BJ (cell line): ENCODE measurements at regions of chr2 and their contacts with region 1.

Region 1: GRCh38 chr2:188976545-188977268 is 2.5 kb downstream of the COL3A1 start:
- DNase-seq: no peak
- H3K4me3 ChIP-seq: peak overlapping the region; percentile 67
- H3K27me3 ChIP-seq: no peaks in the 10 kb centered on the region
- CTCF ChIP-seq: peak; percentile 55

Region 2: GRCh38 chr2:189179570-189179950 is 202.9 kb after region 1 on chr2 and contains the start of gene COL5A2:
- CTCF ChIA-PET with region 1: no interaction called
- POLR2A ChIA-PET with region 1: no interaction called
- DNase-seq: peak; percentile 84
- H3K4me3 ChIP-seq: peak within 1 kb of the TSS; percentile 58
- H3K27me3 ChIP-seq: no peaks in the 10 kb centered on the region
- CTCF ChIP-seq: no peak
- polyA plus RNA-seq, gene COL5A2: 351 and 383 TPM in 2 replicates

Region 3: DNA sequence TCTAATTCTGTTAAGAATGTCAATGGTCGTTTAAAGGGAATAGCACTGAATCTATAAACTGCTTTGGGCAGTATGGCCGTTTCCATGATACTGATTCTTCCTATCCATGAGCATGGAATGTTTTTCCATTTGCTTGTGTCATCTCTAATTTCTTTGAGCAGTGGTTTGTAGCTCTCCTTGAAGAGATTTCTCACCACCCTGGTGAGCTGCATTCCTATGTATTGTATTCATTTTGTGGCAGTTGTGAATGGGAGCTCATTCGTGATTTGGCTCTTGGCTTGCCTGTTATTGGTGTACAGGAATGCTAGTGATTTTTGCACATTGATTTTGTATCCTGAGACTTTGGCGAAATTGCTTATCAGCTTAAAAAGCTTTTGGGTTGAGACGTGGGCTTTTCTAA is 426.2 kb after region 1 on chr2:
- CTCF ChIA-PET with region 1: no interaction called
- POLR2A ChIA-PET with region 1: interaction called, 10 read pairs
- DNase-seq: peak; percentile 81
- H3K4me3 ChIP-seq: no peak overlapping the region
- H3K27me3 ChIP-seq: no peaks in the 10 kb centered on the region
- CTCF ChIP-seq: no peak